ENCODE measurements at regions of chr1 and their contacts with region 1.

Region 1: DNA sequence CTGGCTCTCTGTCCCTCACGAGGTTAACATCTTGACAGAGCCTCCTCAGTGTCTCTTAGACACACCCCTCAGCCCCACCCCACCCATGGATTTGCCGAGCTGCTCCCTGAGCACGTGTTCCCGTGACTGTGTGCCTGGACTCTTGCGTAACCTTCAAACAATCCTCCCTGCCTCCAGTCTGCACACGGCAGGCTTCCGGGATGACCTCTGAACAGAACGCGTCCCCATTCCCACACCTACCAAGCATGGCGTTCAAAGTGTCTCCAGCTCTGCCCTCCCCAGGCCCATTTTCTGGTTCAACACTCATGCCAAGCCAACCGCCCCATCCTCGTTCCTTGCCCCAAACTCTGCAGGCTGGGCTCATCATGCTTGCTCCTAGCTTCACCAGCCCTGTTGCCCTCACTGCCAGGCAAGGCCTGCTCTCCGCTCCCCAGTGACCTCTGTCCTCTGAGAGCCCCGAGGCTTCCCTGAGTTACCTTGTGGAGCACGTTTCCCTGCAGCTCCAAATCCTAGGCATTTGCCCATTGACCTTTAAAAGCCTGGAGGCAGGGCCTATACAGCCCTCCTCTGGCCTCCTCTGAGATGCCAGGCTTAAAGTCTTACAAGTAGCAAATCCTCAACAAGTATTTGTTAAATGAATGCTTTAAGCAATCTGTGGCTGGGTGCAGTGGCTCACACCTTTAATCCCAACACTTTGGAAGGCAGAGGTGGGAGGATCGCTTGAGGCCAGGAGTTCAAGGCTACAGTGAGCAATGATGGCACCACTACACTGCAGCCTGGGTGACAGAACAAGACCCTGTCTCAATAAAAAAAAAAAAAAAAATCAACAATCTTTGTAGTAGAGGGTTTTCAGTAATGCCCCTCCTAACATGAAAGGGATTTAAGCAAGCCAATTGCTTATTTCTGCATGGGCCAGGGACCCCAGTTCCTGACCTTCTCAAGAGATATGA is 5.0 kb downstream of the AGT start:
- DNase-seq: peak; percentile 96 to 99
- H3K4me3 ChIP-seq: no peak overlapping the region
- H3K4me3 Mint-ChIP-seq: peak overlapping the region; percentile 79
- H3K27ac Mint-ChIP-seq: peak overlapping the region; percentile 99
- H3K4me1 ChIP-seq: peaks cover 46% of the 10 kb centered on the region
- H3K4me1 Mint-ChIP-seq: peaks cover 39% of the 10 kb centered on the region
- H3K27me3 ChIP-seq: no peaks in the 10 kb centered on the region
- H3K27me3 Mint-ChIP-seq: no peaks in the 10 kb centered on the region
- CTCF ChIP-seq: no peak

Region 2: DNA sequence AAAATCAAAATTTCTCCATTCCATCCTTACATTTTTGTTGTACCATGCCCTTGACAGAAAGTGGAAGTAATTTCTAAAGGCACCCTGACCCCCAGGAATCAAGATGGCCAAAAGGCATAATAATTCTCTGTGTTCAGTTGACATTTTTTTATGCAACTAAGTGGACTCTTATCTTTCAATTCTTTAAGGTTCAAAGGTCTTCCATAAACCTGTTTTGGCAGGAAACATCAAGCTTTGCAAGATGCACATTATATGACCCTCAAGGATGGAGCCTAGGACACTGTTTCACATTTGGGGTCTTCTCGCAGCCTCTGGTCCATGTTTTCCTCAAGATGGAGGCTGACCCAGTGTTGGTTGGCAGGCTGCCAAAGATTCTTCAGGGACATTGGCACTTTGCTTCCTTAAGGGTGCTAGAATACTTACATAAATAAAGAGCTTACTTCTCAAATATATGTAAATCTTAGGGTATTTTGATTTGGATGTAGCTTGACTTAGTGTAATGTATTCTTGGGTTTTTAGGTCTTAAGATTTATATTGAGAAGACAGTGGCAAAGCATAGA is 114.6 kb before region 1 on chr1:
- CTCF ChIA-PET with region 1: no interaction called
- POLR2A ChIA-PET with region 1: no interaction called
- intact Hi-C with region 1: no loop called
- DNase-seq: no peak
- H3K4me3 ChIP-seq: no peak overlapping the region
- H3K4me3 Mint-ChIP-seq: no peak overlapping the region
- H3K27ac Mint-ChIP-seq: no peak overlapping the region
- H3K4me1 ChIP-seq: no peaks in the 10 kb centered on the region
- H3K4me1 Mint-ChIP-seq: no peaks in the 10 kb centered on the region
- H3K27me3 ChIP-seq: no peaks in the 10 kb centered on the region
- H3K27me3 Mint-ChIP-seq: peaks cover 6% of the 10 kb centered on the region
- CTCF ChIP-seq: no peak

Region 3: GRCh38 chr1:230632273-230632873 is 76.5 kb before region 1 on chr1:
- CTCF ChIA-PET with region 1: no interaction called
- POLR2A ChIA-PET with region 1: no interaction called
- intact Hi-C with region 1: loop called (anchors 2 kb)
- DNase-seq: peak; percentile 56 to 65
- H3K4me3 ChIP-seq: no peak overlapping the region
- H3K4me3 Mint-ChIP-seq: no peak overlapping the region
- H3K27ac Mint-ChIP-seq: no peak overlapping the region
- H3K4me1 ChIP-seq: no peaks in the 10 kb centered on the region
- H3K4me1 Mint-ChIP-seq: no peaks in the 10 kb centered on the region
- H3K27me3 ChIP-seq: no peaks in the 10 kb centered on the region
- H3K27me3 Mint-ChIP-seq: no peaks in the 10 kb centered on the region
- CTCF ChIP-seq: peak; percentile 75 to 84

Region 4: GRCh38 chr1:230642263-230642959 is 66.5 kb before region 1 on chr1 and contains the start of gene COG2:
- CTCF ChIA-PET with region 1: interaction called, 3 read pairs
- POLR2A ChIA-PET with region 1: no interaction called
- intact Hi-C with region 1: loop called (anchors 1 kb)
- DNase-seq: peak; percentile 91 to 98
- H3K4me3 ChIP-seq: peak within 1 kb of the TSS; percentile 60
- H3K4me3 Mint-ChIP-seq: peak within 1 kb of the TSS; percentile 99
- H3K27ac Mint-ChIP-seq: peak within 1 kb of the TSS; percentile 98
- H3K4me1 ChIP-seq: peaks cover 10% of the 10 kb centered on the region
- H3K4me1 Mint-ChIP-seq: peaks cover 28% of the 10 kb centered on the region
- H3K27me3 ChIP-seq: no peaks in the 10 kb centered on the region
- H3K27me3 Mint-ChIP-seq: no peaks in the 10 kb centered on the region
- CTCF ChIP-seq: peak; percentile 96 to 99
- total RNA-seq, gene COG2: 46.9 and 47.9 TPM in 2 replicates

Region 5: DNA sequence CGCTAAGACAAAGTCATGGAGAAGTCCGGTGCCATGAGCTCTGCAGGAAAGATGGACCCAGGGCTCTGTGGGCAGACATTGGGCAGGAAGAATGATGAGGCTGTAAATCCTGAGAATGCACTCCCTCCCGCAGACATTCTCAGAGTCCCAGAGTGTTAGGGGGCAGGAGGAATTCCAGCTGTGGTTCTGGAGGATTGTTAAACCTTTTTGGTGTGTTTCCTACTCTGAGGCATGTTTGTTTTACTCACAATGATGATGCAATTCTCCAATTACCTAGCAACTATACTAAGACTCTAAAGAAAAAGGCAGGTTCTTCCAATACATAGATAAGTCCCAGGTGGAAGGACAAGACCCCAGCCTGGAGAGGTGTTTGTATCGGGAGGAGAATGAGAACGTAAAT is 35.5 kb after region 1 on chr1:
- CTCF ChIA-PET with region 1: no interaction called
- POLR2A ChIA-PET with region 1: no interaction called
- intact Hi-C with region 1: loop called (anchors 2 kb)
- DNase-seq: peak; percentile 48 to 57
- H3K4me3 ChIP-seq: no peak overlapping the region
- H3K4me3 Mint-ChIP-seq: peak overlapping the region; percentile 32
- H3K27ac Mint-ChIP-seq: peak overlapping the region; percentile 80
- H3K4me1 ChIP-seq: peaks cover 42% of the 10 kb centered on the region
- H3K4me1 Mint-ChIP-seq: peaks cover 35% of the 10 kb centered on the region
- H3K27me3 ChIP-seq: no peaks in the 10 kb centered on the region
- H3K27me3 Mint-ChIP-seq: no peaks in the 10 kb centered on the region
- CTCF ChIP-seq: no peak

Region 6: DNA sequence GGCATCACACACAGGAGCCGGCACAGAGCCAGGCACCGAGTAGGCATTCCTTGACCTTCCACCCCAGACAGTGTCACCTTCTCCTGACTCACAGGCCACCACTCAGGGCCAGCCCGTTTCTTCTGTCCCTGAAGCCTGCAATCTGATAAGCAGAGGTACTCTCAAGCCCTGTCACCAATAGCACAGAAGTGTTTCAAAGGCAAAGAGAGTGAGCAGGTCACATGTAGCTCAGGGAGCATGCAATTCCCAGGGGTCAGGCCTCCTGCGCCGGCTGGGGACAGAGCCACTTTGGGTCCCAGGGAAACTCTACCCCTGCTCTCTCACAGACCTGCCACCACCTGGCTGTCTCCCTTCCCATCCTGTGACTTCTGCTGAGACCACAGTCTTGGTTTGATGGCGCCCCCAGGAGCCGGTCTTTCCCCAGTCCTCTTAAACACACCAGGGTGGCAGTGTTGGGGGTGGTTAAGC is 51.5 kb after region 1 on chr1:
- CTCF ChIA-PET with region 1: interaction called, 7 read pairs
- POLR2A ChIA-PET with region 1: no interaction called
- intact Hi-C with region 1: loop called (anchors 2 kb)
- DNase-seq: peak; percentile 75 to 80
- H3K4me3 ChIP-seq: no peak overlapping the region
- H3K4me3 Mint-ChIP-seq: no peak overlapping the region
- H3K27ac Mint-ChIP-seq: peak overlapping the region; percentile 22
- H3K4me1 ChIP-seq: peaks cover 14% of the 10 kb centered on the region
- H3K4me1 Mint-ChIP-seq: peaks cover 29% of the 10 kb centered on the region
- H3K27me3 ChIP-seq: no peaks in the 10 kb centered on the region
- H3K27me3 Mint-ChIP-seq: no peaks in the 10 kb centered on the region
- CTCF ChIP-seq: peak in 1 of 2 experiments; percentile 47

Measured in Caco-2 (cell line).